B cell (primary cell): ENCODE measurements at regions of chr15 and their contacts with region 1.

Region 1: GRCh38 chr15:65660927-65661326 is 39.2 kb downstream of the SLC24A1 start:
- DNase-seq: no peak
- ATAC-seq: no peak
- H3K4me3 ChIP-seq: no peak overlapping the region
- H3K4me3 Mint-ChIP-seq: no peak overlapping the region
- H3K27ac ChIP-seq: no peak overlapping the region
- H3K27ac Mint-ChIP-seq: no peak overlapping the region
- H3K4me1 ChIP-seq: peaks cover 3 to 11% of the 10 kb centered on the region in 2 donors
- H3K4me1 Mint-ChIP-seq: peaks cover 31% of the 10 kb centered on the region
- H3K27me3 ChIP-seq: no peaks in the 10 kb centered on the region
- H3K27me3 Mint-ChIP-seq: no peaks in the 10 kb centered on the region
- CTCF ChIP-seq: no peak

Region 2: DNA sequence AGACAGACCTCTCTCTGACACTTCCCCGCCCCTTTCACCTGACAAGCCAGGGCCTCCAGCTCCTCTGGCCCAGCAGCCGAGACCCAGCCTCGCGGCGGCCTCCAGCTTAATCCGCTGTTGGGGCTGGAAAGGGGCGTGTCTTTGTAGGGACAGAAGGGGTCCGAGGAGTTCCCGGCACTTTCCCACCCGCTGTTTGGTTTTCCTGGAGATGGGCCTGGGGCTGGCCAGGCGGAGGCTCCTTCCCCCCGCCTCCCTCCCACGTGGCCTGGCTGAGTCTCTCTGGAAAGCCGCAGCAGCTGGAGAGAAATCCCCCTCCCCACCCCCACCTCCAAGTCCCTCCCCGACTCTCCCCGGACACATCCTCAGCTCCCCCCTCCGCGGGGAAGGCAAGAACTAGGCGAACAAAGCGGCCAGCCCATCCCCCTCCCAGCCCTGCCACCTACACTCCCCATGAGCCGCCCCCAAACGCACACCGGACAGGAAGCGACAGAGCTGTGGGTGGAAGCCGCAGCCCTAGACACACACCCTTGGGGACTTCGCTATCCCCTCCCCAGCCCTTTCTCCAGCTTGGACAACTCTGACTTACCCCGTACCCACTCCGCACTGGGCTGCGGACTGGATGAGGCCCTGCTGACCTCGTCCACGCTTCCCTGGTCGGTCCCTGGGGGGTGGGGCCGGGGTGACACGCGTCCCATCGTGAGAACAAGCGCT is 239.4 kb before region 1 on chr15:
- CTCF ChIA-PET with region 1: no interaction called
- POLR2A ChIA-PET with region 1: no interaction called
- intact Hi-C with region 1: no loop called
- DNase-seq: peak; percentile 29
- ATAC-seq: no peak
- H3K4me3 ChIP-seq: peak overlapping the region in 4 of 5 experiments; percentile 11 to 55 (median 28)
- H3K4me3 Mint-ChIP-seq: peak overlapping the region; percentile 85
- H3K27ac ChIP-seq: no peak overlapping the region
- H3K27ac Mint-ChIP-seq: no peak overlapping the region
- H3K4me1 ChIP-seq: peaks cover 15 to 23% of the 10 kb centered on the region in 2 donors
- H3K4me1 Mint-ChIP-seq: peaks cover 25% of the 10 kb centered on the region
- H3K27me3 ChIP-seq: peaks cover 0 to 57% (median 24%) of the 10 kb centered on the region in 4 experiments
- H3K27me3 Mint-ChIP-seq: peaks cover 81% of the 10 kb centered on the region
- CTCF ChIP-seq: no peak

Region 3: GRCh38 chr15:65712415-65712814 is 51.5 kb after region 1 on chr15:
- CTCF ChIA-PET with region 1: no interaction called
- POLR2A ChIA-PET with region 1: no interaction called
- intact Hi-C with region 1: loop called (anchors 5 kb)
- DNase-seq: no peak
- ATAC-seq: no peak
- H3K4me3 ChIP-seq: no peak overlapping the region
- H3K4me3 Mint-ChIP-seq: no peak overlapping the region
- H3K27ac ChIP-seq: peak overlapping the region in 1 of 2 donors; percentile 12
- H3K27ac Mint-ChIP-seq: no peak overlapping the region
- H3K4me1 ChIP-seq: no peaks in the 10 kb centered on the region
- H3K4me1 Mint-ChIP-seq: peaks cover 2% of the 10 kb centered on the region
- H3K27me3 ChIP-seq: no peaks in the 10 kb centered on the region
- H3K27me3 Mint-ChIP-seq: no peaks in the 10 kb centered on the region
- CTCF ChIP-seq: no peak